Adrenal gland (tissue), 19 donors: ENCODE measurements at regions of chr9 and their contacts with region 1.

Region 1: GRCh38 chr9:122912964-122913673 is at the start of gene ZBTB6:
- DNase-seq: peak; percentile 64 to 89 (median 80)
- H3K4me3 ChIP-seq: peak within 1 kb of the TSS; percentile 5 to 95 (median 64)
- H3K27ac ChIP-seq: peak within 1 kb of the TSS in 4 of 5 donors; percentile 29 to 93 (median 81)
- H3K4me1 ChIP-seq: peaks cover 10 to 11% of the 10 kb centered on the region in 2 donors
- H3K27me3 ChIP-seq: no peaks in the 10 kb centered on the region
- CTCF ChIP-seq: no peak
- POLR2A ChIP-seq: peak in 1 of 2 donors; percentile 59
- total RNA-seq, gene ZBTB6: 5.2 to 11.6 (median 8.0) TPM

Region 2: DNA sequence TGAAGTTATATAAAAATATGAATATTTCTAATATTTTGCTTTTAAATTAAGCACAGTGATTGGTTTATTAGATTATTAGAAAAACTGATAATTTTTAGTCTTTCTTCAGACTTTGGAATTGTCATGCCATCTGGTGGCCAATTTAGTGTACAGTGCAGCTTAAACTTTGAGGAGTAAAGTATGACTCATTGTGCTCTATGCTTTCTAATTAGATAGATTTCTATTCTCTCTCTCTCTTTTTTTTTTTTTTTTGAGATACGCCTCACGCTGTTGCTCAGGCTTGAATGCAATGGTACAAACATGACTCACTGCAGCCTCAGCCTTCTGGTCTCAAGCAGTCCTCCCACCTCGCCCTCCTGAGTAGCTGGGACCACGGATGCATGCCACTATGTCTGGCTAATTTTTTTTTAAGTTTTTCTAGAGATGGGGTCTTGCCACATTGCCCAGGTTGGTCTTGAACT is 78.3 kb after region 1 on chr9:
- intact Hi-C with region 1: loop called in 1 of 2 experiments (anchors 10 kb)
- DNase-seq: peak; percentile 37 to 77 (median 72)
- H3K4me3 ChIP-seq: no peak overlapping the region
- H3K27ac ChIP-seq: peak overlapping the region in 3 of 5 donors; percentile 25 to 63 (median 50)
- H3K4me1 ChIP-seq: no peaks in the 10 kb centered on the region
- H3K27me3 ChIP-seq: no peaks in the 10 kb centered on the region
- CTCF ChIP-seq: peak; percentile 62 to 85 (median 80)
- POLR2A ChIP-seq: no peak